H1 (cell line): ENCODE measurements at regions of chr16 and their contacts with region 1.

Region 1: GRCh38 chr16:52976539-52977167 is 76.0 kb downstream of the CHD9NB start:
- DNase-seq: no peak
- H3K4me3 ChIP-seq: no peak overlapping the region
- H3K27ac ChIP-seq: no peak overlapping the region
- H3K4me1 ChIP-seq: no peaks in the 10 kb centered on the region
- H3K27me3 ChIP-seq: no peaks in the 10 kb centered on the region
- CTCF ChIP-seq: peak in 2 of 3 experiments; percentile 52 to 69; a peak in 3 of 4 replicates
- EP300 ChIP-seq: no peak
- POLR2A ChIP-seq: no peak
- RAD21 ChIP-seq: peak; percentile 65 to 80

Region 2: GRCh38 chr16:52929478-52930400 is 46.9 kb before region 1 on chr16:
- CTCF ChIA-PET with region 1: no interaction called
- POLR2A ChIA-PET with region 1: no interaction called
- DNase-seq: no peak
- H3K4me3 ChIP-seq: no peak overlapping the region
- H3K27ac ChIP-seq: no peak overlapping the region
- H3K4me1 ChIP-seq: no peaks in the 10 kb centered on the region
- H3K27me3 ChIP-seq: no peaks in the 10 kb centered on the region
- CTCF ChIP-seq: no peak
- EP300 ChIP-seq: no peak
- POLR2A ChIP-seq: no peak
- RAD21 ChIP-seq: no peak

Region 3: GRCh38 chr16:52993179-52993578 is 16.5 kb after region 1 on chr16:
- CTCF ChIA-PET with region 1: interaction called, 19 read pairs
- POLR2A ChIA-PET with region 1: no interaction called
- DNase-seq: no peak
- H3K4me3 ChIP-seq: no peak overlapping the region
- H3K27ac ChIP-seq: no peak overlapping the region
- H3K4me1 ChIP-seq: peaks cover 0 to 5% (median 1%) of the 10 kb centered on the region in 4 experiments; a peak in 1 of 7 replicates
- H3K27me3 ChIP-seq: no peaks in the 10 kb centered on the region
- CTCF ChIP-seq: no peak
- EP300 ChIP-seq: no peak
- POLR2A ChIP-seq: no peak
- RAD21 ChIP-seq: no peak

Region 4: DNA sequence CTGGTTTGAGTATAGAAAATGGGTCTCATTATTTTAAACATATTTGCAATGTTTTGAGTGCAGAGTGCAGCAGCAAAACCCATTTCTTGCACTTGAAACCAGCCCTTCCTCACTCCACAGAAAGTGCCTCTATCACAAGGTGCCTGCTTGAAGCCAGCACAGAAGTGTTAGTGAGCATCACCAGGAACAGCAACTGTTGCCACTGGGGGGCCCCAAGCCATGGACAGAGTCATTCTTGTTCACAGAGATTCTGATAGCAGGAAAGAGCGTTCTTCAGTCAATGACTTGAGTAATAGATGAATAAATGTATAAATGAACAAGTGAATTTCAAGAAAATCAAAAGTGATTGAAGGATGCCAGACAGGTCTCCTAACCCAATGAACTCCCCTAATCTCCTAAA is 30.4 kb after region 1 on chr16:
- CTCF ChIA-PET with region 1: interaction called, 10 read pairs
- POLR2A ChIA-PET with region 1: no interaction called
- DNase-seq: no peak
- H3K4me3 ChIP-seq: no peak overlapping the region
- H3K27ac ChIP-seq: no peak overlapping the region
- H3K4me1 ChIP-seq: no peaks in the 10 kb centered on the region
- H3K27me3 ChIP-seq: no peaks in the 10 kb centered on the region
- CTCF ChIP-seq: peak; percentile 9 to 31 (median 25); a peak in 2 of 4 replicates
- EP300 ChIP-seq: no peak
- POLR2A ChIP-seq: no peak
- RAD21 ChIP-seq: peak in 1 of 2 experiments; percentile 32; a peak in 1 of 4 replicates

Region 5: GRCh38 chr16:53022374-53022773 is 45.7 kb after region 1 on chr16:
- CTCF ChIA-PET with region 1: interaction called, 18 read pairs
- POLR2A ChIA-PET with region 1: no interaction called
- DNase-seq: peak in 1 of 2 experiments; percentile 55
- H3K4me3 ChIP-seq: no peak overlapping the region
- H3K27ac ChIP-seq: no peak overlapping the region
- H3K4me1 ChIP-seq: no peaks in the 10 kb centered on the region
- H3K27me3 ChIP-seq: no peaks in the 10 kb centered on the region
- CTCF ChIP-seq: peak; percentile 52 to 73 (median 70)
- EP300 ChIP-seq: no peak
- POLR2A ChIP-seq: no peak
- RAD21 ChIP-seq: peak; percentile 97 to 98